GM12878 (cell line): ENCODE measurements at regions of chr18 and their contacts with region 1.

Region 1: GRCh38 chr18:44594799-44595467 is 85.8 kb upstream of the SETBP1 start:
- DNase-seq: no peak
- ATAC-seq: no peak
- H3K4me3 ChIP-seq: no peak overlapping the region
- H3K27ac ChIP-seq: no peak overlapping the region
- H3K4me1 ChIP-seq: no peaks in the 10 kb centered on the region
- H3K27me3 ChIP-seq: no peaks in the 10 kb centered on the region; a peak in 1 of 4 replicates
- CTCF ChIP-seq: no peak
- EP300 ChIP-seq: no peak
- POLR2A ChIP-seq: no peak
- RAD21 ChIP-seq: no peak

Region 2: GRCh38 chr18:44246001-44246400 is 348.9 kb before region 1 on chr18:
- CTCF ChIA-PET with region 1: no interaction called
- POLR2A ChIA-PET with region 1: no interaction called
- RAD21 ChIA-PET with region 1: no interaction called
- SMC1A ChIA-PET with region 1: no interaction called
- in situ Hi-C with region 1: no loop called
- intact Hi-C with region 1: no loop called
- DNase-seq: no peak
- ATAC-seq: no peak
- H3K4me3 ChIP-seq: no peak overlapping the region
- H3K27ac ChIP-seq: no peak overlapping the region
- H3K4me1 ChIP-seq: no peaks in the 10 kb centered on the region
- H3K27me3 ChIP-seq: no peaks in the 10 kb centered on the region
- CTCF ChIP-seq: no peak
- EP300 ChIP-seq: no peak
- POLR2A ChIP-seq: no peak
- RAD21 ChIP-seq: no peak

Region 3: GRCh38 chr18:44579028-44579702 is 15.8 kb before region 1 on chr18:
- CTCF ChIA-PET with region 1: interaction called, 10 read pairs
- POLR2A ChIA-PET with region 1: no interaction called
- RAD21 ChIA-PET with region 1: no interaction called
- SMC1A ChIA-PET with region 1: interaction called, 4 read pairs
- in situ Hi-C with region 1: no loop called
- intact Hi-C with region 1: no loop called
- DNase-seq: no peak
- ATAC-seq: peak; percentile 65; the same call in 2 of the 3 replicates
- H3K4me3 ChIP-seq: no peak overlapping the region
- H3K27ac ChIP-seq: no peak overlapping the region
- H3K4me1 ChIP-seq: no peaks in the 10 kb centered on the region
- H3K27me3 ChIP-seq: 0 out of 4 replicates have a peak, but pooled peaks cover 0 to 1% of the 10 kb centered on the region in 2 experiments
- CTCF ChIP-seq: peak; percentile 63 to 78 (median 67); a peak in 5 of 6 replicates
- EP300 ChIP-seq: no peak
- POLR2A ChIP-seq: no peak
- RAD21 ChIP-seq: peak; percentile 68